ENCODE measurements at regions of chr17 and their contacts with region 1.

Region 1: DNA sequence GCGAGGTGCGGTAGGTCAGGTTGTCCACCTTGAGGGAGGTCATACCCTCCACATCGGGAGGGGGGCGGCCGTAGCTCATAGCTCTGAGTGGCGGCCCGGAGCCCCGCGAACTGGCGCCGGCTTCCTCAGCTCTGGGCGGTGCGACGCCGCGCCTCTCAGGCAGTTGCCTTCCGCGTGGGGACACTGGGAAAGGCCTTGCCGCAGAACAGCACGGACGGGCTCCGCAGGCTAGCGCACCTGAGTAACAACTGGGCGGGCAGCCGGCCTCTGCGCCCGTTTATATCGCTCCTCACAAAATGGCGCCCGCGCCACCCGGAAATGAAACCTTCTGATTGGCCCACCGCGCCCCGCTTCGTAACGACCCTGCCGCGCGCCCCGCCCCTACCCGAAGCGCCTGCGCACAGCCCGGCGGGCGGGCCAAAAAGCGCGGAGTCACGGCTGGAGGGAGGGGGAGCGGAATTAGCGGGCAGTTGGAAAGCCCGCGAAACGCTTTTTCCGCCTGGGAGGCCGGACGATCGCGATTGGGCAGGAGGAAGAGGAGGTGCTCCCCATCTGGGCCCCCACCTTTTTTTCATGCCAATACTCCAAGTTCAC is at the start of gene SRSF2:
- DNase-seq: peak; percentile 100
- H3K4me3 Mint-ChIP-seq: peak within 1 kb of the TSS; percentile 97
- H3K27ac Mint-ChIP-seq: peak within 1 kb of the TSS; percentile 97
- H3K4me1 Mint-ChIP-seq: peaks cover 34% of the 10 kb centered on the region
- H3K27me3 Mint-ChIP-seq: no peaks in the 10 kb centered on the region
- total RNA-seq, gene SRSF2: 456 and 478 TPM in 2 replicates

Region 2: DNA sequence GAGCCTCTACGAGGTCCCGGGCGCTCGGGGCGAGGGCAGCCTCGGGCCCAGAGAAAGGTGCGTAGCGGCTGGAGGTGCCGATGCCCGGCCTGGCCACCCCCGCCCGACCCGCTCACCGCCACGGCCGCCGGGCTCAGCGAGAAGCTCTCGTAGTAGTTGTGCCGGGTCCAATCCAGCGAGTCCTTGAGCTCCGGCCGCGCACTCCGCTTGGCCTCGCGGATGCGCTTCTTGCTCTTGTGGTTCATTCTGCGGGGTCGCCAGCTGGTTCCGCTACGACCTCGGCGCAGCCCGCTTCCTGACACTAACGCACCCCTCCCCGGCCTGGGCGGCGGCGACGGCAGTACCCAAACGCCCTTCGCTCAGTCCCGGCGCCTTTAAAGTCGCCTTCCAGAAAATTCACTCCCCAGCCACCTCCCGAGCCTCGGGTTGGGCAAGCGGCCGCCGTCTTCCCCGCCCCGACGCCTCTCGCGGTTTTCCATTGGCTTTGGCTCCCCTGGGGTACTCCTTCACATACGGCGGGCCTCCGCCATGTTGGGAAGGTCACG is 10.9 kb before region 1 on chr17 and contains the start of gene JMJD6:
- intact Hi-C with region 1: loop called (anchors 1 kb)
- DNase-seq: peak; percentile 96
- H3K4me3 Mint-ChIP-seq: peak within 1 kb of the TSS; percentile 91
- H3K27ac Mint-ChIP-seq: peak within 1 kb of the TSS; percentile 93
- H3K4me1 Mint-ChIP-seq: peaks cover 27% of the 10 kb centered on the region
- H3K27me3 Mint-ChIP-seq: no peaks in the 10 kb centered on the region
- total RNA-seq, gene JMJD6: 83.5 and 84.9 TPM in 2 replicates

Region 3: GRCh38 chr17:76753061-76753961 is 16.1 kb after region 1 on chr17:
- intact Hi-C with region 1: loop called (anchors 2 kb)
- DNase-seq: peak; percentile 14
- H3K4me3 Mint-ChIP-seq: peak overlapping the region; percentile 83
- H3K27ac Mint-ChIP-seq: peak overlapping the region; percentile 84
- H3K4me1 Mint-ChIP-seq: peaks cover 19% of the 10 kb centered on the region
- H3K27me3 Mint-ChIP-seq: no peaks in the 10 kb centered on the region

Region 4: DNA sequence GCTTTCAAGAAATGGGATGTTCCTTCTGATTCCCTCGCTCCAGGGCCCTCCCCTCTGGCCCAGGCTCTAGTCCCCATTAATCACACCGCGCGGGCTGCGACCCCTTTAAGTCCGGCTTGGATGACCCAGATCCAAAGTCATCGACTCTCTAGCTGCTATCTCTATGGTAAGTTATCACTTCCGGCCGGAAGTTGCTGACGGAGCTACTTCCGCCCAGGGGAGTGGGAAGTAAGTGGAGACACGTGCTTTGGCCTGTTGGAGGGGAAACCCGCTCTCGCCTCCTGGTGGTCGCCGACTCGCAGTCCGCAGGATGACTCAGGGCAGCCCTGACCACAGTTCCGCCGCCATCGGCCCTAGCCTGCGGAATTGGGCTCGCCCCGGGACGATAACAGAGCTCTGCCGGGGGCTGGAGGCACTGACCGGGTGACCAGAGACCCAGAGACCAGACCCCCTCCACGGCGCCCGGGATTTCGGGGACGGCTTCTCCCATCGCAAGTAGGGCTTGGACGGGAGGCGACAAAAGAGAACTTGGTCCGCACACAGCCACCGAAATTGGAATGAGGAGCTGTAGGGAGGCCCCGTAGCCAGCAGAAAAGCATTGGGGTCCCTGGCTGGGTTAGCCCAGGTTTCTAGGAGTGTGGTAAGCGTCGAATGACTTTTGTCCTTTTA is 351.4 kb after region 1 on chr17:
- intact Hi-C with region 1: loop called (anchors 5 kb)
- DNase-seq: peak; percentile 80
- H3K4me3 Mint-ChIP-seq: peak overlapping the region; percentile 91
- H3K27ac Mint-ChIP-seq: peak overlapping the region; percentile 94
- H3K4me1 Mint-ChIP-seq: peaks cover 38% of the 10 kb centered on the region
- H3K27me3 Mint-ChIP-seq: peaks cover 2% of the 10 kb centered on the region

Region 5: DNA sequence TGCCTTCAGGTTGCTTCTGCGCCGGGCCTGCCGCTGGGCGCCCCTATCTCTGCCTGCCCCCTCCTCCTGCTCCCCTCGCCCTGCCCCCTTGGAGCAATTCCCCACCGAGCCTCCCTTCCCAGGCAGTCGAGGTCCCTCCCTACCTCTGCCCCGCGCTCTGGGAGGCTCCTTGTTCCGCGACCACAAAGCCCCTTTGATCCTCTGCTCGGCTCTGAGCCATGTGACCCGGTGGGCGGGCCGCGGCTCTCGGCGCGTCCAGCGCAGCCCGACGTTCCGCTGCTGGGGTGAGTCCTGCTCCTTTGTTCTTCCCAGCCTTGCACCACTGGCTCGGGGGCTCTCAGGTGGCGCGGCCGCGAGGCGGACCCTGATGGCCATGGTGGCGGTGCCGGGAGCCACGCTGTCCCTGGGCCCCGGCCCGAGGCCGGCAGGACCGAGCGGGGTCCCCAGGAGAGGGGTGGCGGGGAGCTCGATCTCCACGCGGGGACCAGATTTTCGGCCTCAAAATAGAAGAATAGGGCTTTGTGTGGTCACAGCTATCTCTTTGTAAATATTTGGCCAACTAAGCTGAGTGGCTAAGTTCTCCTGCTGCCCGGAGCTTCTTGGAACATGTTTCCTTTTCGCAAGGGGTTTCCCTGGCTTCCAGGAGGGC is 714.2 kb after region 1 on chr17:
- intact Hi-C with region 1: loop called (anchors 10 kb)
- DNase-seq: peak; percentile 68
- H3K4me3 Mint-ChIP-seq: peak overlapping the region; percentile 99
- H3K27ac Mint-ChIP-seq: peak overlapping the region; percentile 93
- H3K4me1 Mint-ChIP-seq: peaks cover 52% of the 10 kb centered on the region
- H3K27me3 Mint-ChIP-seq: no peaks in the 10 kb centered on the region

Region 6: DNA sequence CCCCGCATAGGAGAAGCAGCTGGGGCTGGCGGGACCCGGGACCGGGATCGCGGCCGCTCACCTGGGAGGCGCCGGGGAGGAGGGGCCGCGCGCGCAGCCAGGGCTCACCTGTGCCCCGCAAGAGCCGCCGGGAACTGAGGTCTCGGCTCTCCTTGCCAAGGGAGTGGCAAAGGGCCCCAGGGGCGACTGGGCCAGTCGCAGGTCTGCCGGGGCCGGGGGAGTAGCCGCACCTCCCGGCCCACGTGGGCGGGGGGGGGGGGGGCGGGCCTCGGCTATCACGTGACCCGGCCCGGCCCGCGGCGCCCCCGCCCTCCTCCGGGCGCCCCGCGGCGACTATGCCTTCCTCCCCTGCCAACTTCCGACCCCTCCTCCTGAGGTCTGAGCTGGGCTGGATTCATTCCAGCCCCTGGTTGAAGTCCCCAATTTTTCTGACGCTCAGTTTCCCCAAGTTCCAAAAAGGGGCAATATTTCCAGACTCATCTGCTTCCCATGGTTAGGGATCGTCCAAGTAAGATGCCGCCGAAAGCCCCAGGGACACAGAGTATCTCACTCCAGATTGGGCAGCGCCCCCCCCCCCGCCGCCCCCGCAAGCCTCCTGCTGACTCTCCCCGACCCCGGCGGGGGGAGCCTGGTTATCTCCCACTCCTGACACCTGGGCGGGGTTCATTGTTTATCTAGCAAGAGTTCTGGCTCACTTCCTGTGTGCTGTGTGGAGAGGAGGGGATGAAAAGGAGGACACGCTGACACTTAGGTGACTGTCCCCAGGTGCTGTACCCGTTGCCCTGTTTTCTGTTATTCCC is 1391.6 kb after region 1 on chr17 and contains the start of gene TMC6:
- intact Hi-C with region 1: loop called (anchors 10 kb)
- DNase-seq: peak; percentile 68
- H3K4me3 Mint-ChIP-seq: peak within 1 kb of the TSS; percentile 91
- H3K27ac Mint-ChIP-seq: peak within 1 kb of the TSS; percentile 98
- H3K4me1 Mint-ChIP-seq: peaks cover 37% of the 10 kb centered on the region
- H3K27me3 Mint-ChIP-seq: no peaks in the 10 kb centered on the region
- total RNA-seq, gene TMC6: 240 and 241 TPM in 2 replicates

Measured in activated T-helper 2 cell treated with anti-CD3 and anti-CD28 coated beads, Interferon-gamma antibody, Interleukin-2, Interleukin-4, amounts not matched to agents 10 μg/mL and 5 μg/mL and 100 μg/mL, durations not matched to agents 14 hours and 24 hours and 36 hours (primary cell).